Cardiac septum (tissue), 1 donor: ENCODE measurements at regions of chr12 and their contacts with region 1.

Region 1: DNA sequence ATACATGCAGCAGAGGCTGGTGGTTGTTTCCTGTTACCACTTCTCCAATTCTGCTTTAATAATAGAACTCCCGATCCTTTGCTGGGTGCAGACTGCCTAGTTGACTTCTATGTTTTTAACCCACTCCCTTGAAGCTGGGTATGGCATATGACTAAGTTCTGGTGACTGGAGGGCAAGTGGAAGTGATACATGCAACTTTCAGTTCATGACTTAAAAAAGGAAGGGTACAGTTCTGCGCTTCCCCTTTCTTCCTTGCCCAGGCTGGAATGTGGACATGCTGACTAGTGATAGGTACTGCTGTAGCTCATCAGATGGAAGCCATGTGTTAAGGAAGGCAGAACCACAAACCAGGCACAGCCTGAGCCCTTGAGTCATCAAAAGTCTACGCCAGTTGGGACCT is 2.4 kb upstream of the A2M start:
- DNase-seq: no peak

Region 2: GRCh38 chr12:9064815-9065606 is 53.1 kb before region 1 on chr12:
- intact Hi-C with region 1: loop called (anchors 5 kb)
- DNase-seq: peak; percentile 86

Region 3: GRCh38 chr12:9163392-9163791 is 45.2 kb after region 1 on chr12:
- intact Hi-C with region 1: loop called (anchors 5 kb)
- DNase-seq: no peak

Region 4: GRCh38 chr12:9237286-9237685 is 119.1 kb after region 1 on chr12:
- intact Hi-C with region 1: loop called (anchors 5 kb)
- DNase-seq: no peak

Region 5: DNA sequence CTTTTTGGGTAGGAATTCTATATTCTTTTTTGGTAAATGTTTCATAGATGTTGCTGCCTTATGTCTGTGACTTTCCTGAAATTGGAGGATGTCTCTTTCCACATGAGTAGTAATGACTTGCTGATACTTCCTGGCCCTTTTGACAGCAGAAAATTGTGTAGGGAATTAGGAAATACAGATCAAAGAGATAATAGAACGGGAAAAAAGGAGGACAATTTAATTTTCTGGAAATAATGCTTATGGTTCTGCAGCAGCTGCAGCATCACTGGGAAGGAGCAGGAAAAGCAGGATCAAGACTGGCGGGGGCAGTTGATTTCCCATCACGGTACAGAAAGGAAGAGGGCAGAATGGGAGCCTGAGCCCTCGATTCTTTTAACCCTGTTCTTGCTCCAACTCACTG is 158.8 kb after region 1 on chr12:
- intact Hi-C with region 1: loop called (anchors 10 kb)
- DNase-seq: no peak

Region 6: GRCh38 chr12:9464408-9464807 is 346.2 kb after region 1 on chr12:
- intact Hi-C with region 1: no loop called
- DNase-seq: no peak